Transverse colon (tissue), 4 donors: ENCODE measurements at regions of chr17 and their contacts with region 1.

Region 1: DNA sequence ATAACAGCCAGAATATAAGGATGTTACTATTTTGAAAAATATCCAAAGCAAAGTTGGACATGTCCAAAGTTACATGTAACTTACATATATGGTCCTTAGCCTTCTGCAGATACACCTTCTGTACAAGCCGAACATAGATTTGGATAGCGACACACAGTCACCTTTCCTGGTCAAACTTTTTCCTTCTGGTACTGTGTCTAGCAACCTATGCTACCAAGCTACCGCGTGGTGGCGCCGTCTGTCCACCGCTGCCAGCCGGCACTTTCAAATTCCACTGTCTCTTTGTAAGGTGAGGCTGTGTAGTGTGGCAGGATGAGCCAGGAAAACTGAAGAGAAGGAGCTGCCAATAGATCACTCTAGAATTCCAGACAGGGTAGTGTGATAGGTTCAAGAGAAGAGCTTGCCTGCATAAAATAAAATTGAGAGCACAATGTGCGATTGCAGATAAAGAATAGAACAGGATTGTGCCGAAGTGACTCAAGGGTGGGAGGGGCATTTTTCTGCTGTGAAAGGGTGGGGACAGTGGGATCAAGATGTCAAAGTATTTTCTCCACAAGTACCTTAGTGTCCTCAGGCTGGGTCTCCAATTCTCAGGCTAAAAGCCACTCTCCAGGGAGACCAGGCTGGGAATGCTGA is 366.9 kb downstream of the SLC39A11 start:
- DNase-seq: peak; percentile 69
- H3K4me3 ChIP-seq: no peak overlapping the region
- H3K27ac ChIP-seq: no peak overlapping the region
- H3K4me1 ChIP-seq: peaks cover 0 to 9% (median 3%) of the 10 kb centered on the region in 4 donors
- H3K27me3 ChIP-seq: no peaks in the 10 kb centered on the region
- CTCF ChIP-seq: peak; percentile 67 to 89 (median 80)
- EP300 ChIP-seq: no peak
- POLR2A ChIP-seq: no peak

Region 2: DNA sequence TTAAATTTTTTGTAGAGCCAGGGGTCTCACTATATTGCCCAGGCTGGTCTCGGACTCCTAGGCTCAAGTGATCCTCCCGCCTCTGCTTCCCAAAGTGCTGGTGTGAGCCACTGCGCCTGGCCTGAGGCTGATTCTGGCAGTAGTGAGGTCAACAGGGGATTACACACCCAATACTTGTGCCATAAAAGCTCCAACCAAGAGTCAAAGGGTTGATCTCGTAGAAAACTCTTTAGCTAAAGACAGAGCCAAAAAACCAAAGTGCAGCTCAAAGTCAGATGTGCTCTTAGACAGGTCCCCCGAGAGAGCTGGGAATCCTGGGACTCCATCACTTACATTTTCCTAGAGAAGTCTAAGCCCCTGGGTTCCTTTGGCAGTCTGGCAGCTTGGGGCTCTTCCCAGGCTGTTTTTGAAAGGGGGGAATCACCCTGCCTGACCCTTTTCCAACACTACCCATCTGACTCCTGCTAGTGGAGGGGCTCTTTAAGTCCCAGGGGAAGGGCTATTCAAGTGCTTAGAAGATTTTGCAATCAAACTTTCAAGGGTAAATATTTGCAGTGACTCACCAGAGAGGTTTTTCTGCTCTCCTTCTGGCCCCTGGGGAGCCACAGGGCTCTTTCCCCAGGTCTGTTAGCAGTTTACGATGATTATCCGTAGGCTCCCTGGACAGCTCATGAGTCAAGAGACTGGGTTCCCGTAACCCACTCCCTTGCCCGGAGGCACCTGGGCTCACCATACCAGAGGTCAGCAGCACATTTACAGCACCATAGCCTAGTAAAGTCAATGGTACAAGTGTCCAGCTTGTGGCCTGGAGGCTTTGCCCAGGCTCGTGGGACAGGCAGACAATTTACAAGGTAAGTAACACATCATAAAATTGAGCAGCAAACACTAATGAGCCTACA is 41.8 kb before region 1 on chr17:
- in situ Hi-C with region 1: no loop called
- intact Hi-C with region 1: no loop called
- DNase-seq: peak; percentile 35
- H3K4me3 ChIP-seq: no peak overlapping the region
- H3K27ac ChIP-seq: peak overlapping the region in 3 of 4 donors; percentile 25 to 48 (median 34)
- H3K4me1 ChIP-seq: peaks cover 4 to 18% (median 11%) of the 10 kb centered on the region in 4 donors
- H3K27me3 ChIP-seq: no peaks in the 10 kb centered on the region
- CTCF ChIP-seq: no peak
- EP300 ChIP-seq: no peak
- POLR2A ChIP-seq: no peak

Region 3: DNA sequence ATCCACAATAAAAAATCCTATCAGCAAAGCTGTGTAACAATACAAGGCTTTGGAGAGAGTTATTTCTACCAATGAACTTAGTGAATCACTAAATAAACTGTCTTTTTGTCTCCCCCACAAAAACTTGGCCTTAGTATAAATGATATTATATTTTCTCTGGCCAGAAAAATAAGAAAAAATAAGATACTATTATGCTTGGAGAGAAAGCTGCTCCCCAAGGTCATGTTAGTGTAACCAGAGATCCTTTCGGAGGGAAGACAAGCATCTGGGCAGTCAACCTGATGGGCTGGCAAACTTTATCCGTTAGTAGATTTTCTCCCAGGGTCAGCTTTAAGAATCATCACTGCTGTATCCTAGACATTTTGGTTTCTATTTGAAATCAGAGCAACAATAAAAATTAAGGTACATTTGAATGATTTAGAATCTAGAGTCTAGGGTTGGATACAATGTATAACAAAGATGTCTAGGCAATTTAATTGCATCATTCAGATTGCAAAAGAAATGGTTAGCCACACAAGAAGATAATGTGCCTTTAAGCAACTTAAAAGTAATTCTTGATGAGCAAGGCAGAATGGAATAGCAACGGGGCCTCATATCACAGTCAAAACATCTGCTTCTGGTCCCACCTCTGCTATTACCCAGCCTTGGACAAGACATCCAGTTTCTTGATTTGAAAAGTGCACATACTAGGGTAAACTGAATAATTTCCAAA is 86.6 kb after region 1 on chr17:
- in situ Hi-C with region 1: no loop called
- intact Hi-C with region 1: no loop called
- DNase-seq: no peak
- H3K4me3 ChIP-seq: no peak overlapping the region
- H3K27ac ChIP-seq: no peak overlapping the region
- H3K4me1 ChIP-seq: no peaks in the 10 kb centered on the region
- H3K27me3 ChIP-seq: no peaks in the 10 kb centered on the region
- CTCF ChIP-seq: no peak
- EP300 ChIP-seq: no peak
- POLR2A ChIP-seq: no peak

Region 4: GRCh38 chr17:73156166-73156840 is 430.8 kb after region 1 on chr17:
- in situ Hi-C with region 1: loop called in 3 of 4 experiments (anchors 10 kb)
- intact Hi-C with region 1: loop called (anchors 10 kb)
- DNase-seq: peak; percentile 67
- H3K4me3 ChIP-seq: no peak overlapping the region
- H3K27ac ChIP-seq: no peak overlapping the region
- H3K4me1 ChIP-seq: peaks cover 0 to 18% (median 3%) of the 10 kb centered on the region in 4 donors
- H3K27me3 ChIP-seq: peaks cover 45% of the 10 kb centered on the region
- CTCF ChIP-seq: peak; percentile 69 to 84 (median 75)
- EP300 ChIP-seq: no peak
- POLR2A ChIP-seq: no peak

Region 5: DNA sequence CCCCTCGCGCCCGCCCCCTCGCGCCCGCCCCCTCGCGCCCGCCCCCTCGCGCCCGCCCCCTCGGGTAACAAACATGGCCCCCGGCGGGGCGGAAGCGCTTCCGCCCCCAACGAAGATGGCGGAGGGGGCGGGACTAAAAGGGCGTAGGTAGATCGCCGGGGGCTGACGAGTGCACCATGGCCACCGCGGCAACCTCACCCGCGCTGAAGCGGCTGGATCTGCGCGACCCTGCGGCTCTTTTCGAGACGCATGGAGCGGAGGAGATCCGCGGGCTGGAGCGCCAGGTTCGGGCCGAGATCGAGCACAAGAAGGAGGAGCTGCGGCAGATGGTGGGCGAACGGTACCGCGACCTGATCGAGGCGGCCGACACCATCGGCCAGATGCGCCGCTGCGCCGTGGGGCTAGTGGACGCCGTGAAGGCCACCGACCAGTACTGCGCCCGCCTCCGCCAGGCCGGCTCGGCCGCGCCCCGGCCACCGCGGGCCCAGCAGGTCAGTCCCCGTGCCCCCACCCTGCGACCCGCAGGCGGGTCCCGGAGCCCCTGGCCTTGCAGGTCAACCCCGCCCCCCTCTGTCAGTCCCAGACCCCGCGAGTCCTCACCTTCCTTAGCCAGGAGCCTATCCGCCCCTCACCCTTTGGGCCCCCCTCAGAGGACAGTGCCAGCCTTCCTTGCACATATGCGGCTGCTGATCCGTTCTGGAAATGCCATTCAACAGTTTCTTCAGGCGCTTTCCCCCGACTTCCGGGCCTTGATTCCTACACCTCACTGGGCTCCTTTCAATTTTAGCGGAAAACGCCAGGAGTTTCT is 467.5 kb after region 1 on chr17 and contains the start of gene COG1:
- in situ Hi-C with region 1: loop called in 2 of 4 experiments (anchors 10 kb)
- intact Hi-C with region 1: no loop called
- DNase-seq: peak; percentile 92
- H3K4me3 ChIP-seq: peak within 1 kb of the TSS; percentile 81 to 99 (median 90)
- H3K27ac ChIP-seq: peak within 1 kb of the TSS; percentile 91 to 95 (median 94)
- H3K4me1 ChIP-seq: peaks cover 5 to 27% (median 17%) of the 10 kb centered on the region in 4 donors
- H3K27me3 ChIP-seq: no peaks in the 10 kb centered on the region
- CTCF ChIP-seq: no peak
- EP300 ChIP-seq: no peak
- POLR2A ChIP-seq: peak; percentile 72
- total RNA-seq, gene COG1: 54.2 to 126 (median 69.1) TPM

Region 6: DNA sequence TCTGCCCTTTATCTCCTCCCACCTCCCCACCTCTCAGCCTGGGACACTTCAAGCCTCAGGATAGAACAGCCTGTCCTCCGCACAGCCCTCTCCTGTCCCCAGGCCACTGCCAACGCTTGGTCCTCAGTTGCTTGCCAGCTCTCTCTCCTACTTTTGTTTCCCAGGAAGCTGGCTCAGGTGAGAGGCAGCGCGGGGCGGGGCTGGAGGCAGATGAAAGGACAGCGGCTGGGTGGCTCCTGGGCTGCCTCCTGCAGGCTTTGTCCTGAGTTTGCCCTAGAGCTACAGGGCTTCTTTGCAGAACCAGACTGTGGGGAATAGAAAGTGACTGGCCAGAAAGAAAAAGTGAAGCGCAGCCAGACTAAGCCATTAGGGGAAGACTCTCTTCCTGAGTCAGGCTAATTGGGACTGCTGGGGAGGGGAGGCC is 634.4 kb after region 1 on chr17:
- in situ Hi-C with region 1: loop called in 2 of 4 experiments (anchors 25 kb)
- intact Hi-C with region 1: no loop called
- DNase-seq: peak; percentile 77
- H3K4me3 ChIP-seq: no peak overlapping the region
- H3K27ac ChIP-seq: no peak overlapping the region
- H3K4me1 ChIP-seq: peaks cover 0 to 20% (median 2%) of the 10 kb centered on the region in 4 donors
- H3K27me3 ChIP-seq: no peaks in the 10 kb centered on the region
- CTCF ChIP-seq: peak in 2 of 5 experiments; percentile 27 to 39
- EP300 ChIP-seq: no peak
- POLR2A ChIP-seq: no peak

Region 7: GRCh38 chr17:73371285-73371684 is 645.7 kb after region 1 on chr17:
- in situ Hi-C with region 1: loop called in 3 of 4 experiments (anchors 10 to 25 kb)
- intact Hi-C with region 1: no loop called
- DNase-seq: no peak
- H3K4me3 ChIP-seq: no peak overlapping the region
- H3K27ac ChIP-seq: no peak overlapping the region
- H3K4me1 ChIP-seq: no peaks in the 10 kb centered on the region
- H3K27me3 ChIP-seq: no peaks in the 10 kb centered on the region
- CTCF ChIP-seq: no peak
- EP300 ChIP-seq: no peak
- POLR2A ChIP-seq: no peak